Activated CD4-positive, alpha-beta memory T cell treated with anti-CD3 and anti-CD28 coated beads for 36 hours (primary cell): ENCODE measurements at regions of chr7 and their contacts with region 1.

Region 1: GRCh38 chr7:142632291-142633134 is 116.8 kb upstream of the PRSS1 start:
- DNase-seq: peak; percentile 66
- H3K4me3 Mint-ChIP-seq: no peak overlapping the region
- H3K27ac Mint-ChIP-seq: no peak overlapping the region
- H3K4me1 Mint-ChIP-seq: peaks cover 3% of the 10 kb centered on the region
- H3K27me3 Mint-ChIP-seq: no peaks in the 10 kb centered on the region

Region 2: DNA sequence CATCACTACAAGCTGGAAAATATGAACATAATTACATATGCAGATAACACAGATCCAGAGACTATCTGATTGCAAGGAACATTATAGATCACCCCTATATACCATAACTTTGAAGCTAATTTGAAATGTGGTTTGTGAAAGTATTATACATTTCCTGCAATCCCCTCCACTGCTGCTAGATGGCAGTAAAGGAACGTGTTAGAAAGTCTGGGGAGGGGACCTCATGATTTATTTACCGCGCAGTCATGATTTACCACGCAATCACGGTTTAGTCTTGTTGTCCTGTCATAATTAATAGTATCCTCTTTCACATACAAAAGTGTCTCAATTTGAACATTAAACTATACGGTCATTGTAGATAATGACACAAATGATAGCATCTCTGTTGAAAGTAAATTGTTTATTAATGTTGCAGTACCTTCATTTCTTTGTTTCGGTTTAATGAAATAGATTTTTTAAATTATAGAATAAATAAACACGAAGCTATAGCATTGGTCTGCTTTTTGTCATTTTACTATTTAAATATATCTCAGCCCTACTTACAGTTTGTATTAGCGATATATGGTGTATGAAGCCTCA is 28.6 kb before region 1 on chr7:
- CTCF ChIA-PET with region 1: interaction called, 10 read pairs
- POLR2A ChIA-PET with region 1: no interaction called
- intact Hi-C with region 1: no loop called
- DNase-seq: peak; percentile 58
- H3K4me3 Mint-ChIP-seq: peak overlapping the region; percentile 35
- H3K27ac Mint-ChIP-seq: no peak overlapping the region
- H3K4me1 Mint-ChIP-seq: peaks cover 3% of the 10 kb centered on the region
- H3K27me3 Mint-ChIP-seq: no peaks in the 10 kb centered on the region

Region 3: GRCh38 chr7:142669074-142669654 is 36.7 kb after region 1 on chr7:
- CTCF ChIA-PET with region 1: interaction called, 4 read pairs
- POLR2A ChIA-PET with region 1: no interaction called
- intact Hi-C with region 1: loop called (anchors 1 kb)
- DNase-seq: no peak
- H3K4me3 Mint-ChIP-seq: no peak overlapping the region
- H3K27ac Mint-ChIP-seq: peak overlapping the region; percentile 68
- H3K4me1 Mint-ChIP-seq: peaks cover 29% of the 10 kb centered on the region
- H3K27me3 Mint-ChIP-seq: no peaks in the 10 kb centered on the region

Region 4: DNA sequence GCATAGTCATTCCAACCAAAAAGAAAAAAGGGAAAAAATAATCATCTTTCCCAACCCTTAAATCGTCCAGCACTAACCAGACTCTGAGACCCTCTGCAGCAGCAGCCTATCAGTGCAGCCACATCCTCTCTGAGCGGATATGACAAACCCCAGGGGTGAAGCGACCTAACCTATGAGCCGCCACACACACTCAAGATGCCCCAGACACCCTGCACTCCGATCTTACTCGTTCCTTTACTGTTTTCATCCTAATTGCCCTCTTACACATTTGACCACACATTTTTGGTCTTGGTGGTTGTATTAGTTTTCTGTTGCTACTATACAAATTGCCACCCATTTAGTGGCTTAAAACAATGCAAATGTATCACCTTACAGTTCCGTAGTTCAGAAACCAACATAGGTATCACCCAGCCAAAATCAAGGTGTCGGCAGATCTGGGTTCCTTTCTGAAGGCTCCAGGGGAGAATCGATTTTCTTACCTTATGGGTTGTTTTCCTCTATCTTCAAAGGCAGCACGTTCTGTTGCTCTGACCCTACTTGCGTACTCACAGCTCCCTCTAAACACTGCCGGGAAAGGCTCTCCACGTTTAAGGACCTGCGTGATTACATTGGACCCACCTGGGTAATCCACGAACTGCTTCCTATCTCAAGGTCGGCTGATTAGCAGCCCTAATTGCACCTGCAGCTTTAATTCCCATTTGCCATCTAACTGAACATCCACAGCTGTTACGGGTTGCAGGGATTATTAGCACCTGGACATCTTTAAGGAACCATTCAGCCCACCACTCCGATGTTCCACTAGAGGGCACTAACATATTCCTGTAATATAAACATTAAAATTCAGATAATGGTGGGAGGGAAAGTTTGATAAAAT is 79.5 kb after region 1 on chr7:
- CTCF ChIA-PET with region 1: interaction called, 4 read pairs
- POLR2A ChIA-PET with region 1: no interaction called
- intact Hi-C with region 1: loop called (anchors 5 kb)
- DNase-seq: peak; percentile 52
- H3K4me3 Mint-ChIP-seq: peak overlapping the region; percentile 79
- H3K27ac Mint-ChIP-seq: peak overlapping the region; percentile 89
- H3K4me1 Mint-ChIP-seq: peaks cover 50% of the 10 kb centered on the region
- H3K27me3 Mint-ChIP-seq: no peaks in the 10 kb centered on the region

Region 5: DNA sequence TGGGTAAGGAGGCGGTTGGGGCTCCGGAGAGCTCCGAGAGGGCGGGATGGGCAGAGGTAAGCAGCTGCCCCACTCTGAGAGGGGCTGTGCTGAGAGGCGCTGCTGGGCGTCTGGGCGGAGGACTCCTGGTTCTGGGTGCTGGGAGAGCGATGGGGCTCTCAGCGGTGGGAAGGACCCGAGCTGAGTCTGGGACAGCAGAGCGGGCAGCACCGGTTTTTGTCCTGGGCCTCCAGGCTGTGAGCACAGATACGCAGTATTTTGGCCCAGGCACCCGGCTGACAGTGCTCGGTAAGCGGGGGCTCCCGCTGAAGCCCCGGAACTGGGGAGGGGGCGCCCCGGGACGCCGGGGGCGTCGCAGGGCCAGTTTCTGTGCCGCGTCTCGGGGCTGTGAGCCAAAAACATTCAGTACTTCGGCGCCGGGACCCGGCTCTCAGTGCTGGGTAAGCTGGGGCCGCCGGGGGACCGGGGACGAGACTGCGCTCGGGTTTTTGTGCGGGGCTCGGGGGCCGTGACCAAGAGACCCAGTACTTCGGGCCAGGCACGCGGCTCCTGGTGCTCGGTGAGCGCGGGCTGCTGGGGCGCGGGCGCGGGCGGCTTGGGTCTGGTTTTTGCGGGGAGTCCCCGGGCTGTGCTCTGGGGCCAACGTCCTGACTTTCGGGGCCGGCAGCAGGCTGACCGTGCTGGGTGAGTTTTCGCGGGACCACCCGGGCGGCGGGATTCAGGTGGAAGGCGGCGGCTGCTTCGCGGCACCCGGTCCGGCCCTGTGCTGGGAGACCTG is 164.3 kb after region 1 on chr7:
- CTCF ChIA-PET with region 1: no interaction called
- POLR2A ChIA-PET with region 1: interaction called, 16 read pairs
- intact Hi-C with region 1: no loop called
- DNase-seq: no peak
- H3K4me3 Mint-ChIP-seq: peak overlapping the region; percentile 100
- H3K27ac Mint-ChIP-seq: peak overlapping the region; percentile 100
- H3K4me1 Mint-ChIP-seq: peaks cover 62% of the 10 kb centered on the region
- H3K27me3 Mint-ChIP-seq: no peaks in the 10 kb centered on the region

Region 6: DNA sequence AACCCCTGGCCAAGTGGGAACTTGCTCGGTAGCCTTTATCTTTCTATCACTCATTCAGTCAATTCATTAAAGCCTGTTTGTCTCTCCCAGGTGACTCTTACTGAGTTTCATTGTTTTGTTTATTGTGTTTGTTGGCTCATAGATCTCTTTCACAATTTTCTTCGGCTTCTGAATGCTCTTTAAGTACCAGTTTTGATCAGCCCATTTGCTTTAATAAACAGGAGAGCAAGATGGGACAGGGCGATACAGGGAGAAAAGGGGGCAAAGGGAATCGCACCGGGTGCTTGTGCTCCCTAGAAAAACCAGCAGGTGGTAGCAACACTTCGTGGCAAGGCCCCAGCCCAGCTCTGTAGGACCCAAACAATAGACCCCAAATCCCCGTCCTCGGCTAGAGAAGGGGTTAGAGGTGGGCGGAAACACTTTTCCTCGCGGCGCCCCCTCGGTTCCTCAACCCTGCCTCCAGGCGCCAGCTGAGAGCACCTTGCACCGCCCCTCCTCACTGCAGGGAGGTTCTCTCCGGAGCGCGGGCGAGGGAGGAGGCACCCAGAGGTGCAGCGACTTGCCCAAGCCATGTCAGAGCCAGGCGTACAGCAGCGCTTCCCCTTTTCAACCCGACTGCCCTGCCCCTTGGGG is 221.3 kb after region 1 on chr7:
- CTCF ChIA-PET with region 1: interaction called, 3 read pairs
- POLR2A ChIA-PET with region 1: no interaction called
- intact Hi-C with region 1: loop called (anchors 5 kb)
- DNase-seq: peak; percentile 73
- H3K4me3 Mint-ChIP-seq: peak overlapping the region; percentile 93
- H3K27ac Mint-ChIP-seq: peak overlapping the region; percentile 72
- H3K4me1 Mint-ChIP-seq: peaks cover 16% of the 10 kb centered on the region
- H3K27me3 Mint-ChIP-seq: peaks cover 3% of the 10 kb centered on the region